Heart right ventricle (tissue), 16 donors: ENCODE measurements at regions of chr10 and their contacts with region 1.

Region 1: DNA sequence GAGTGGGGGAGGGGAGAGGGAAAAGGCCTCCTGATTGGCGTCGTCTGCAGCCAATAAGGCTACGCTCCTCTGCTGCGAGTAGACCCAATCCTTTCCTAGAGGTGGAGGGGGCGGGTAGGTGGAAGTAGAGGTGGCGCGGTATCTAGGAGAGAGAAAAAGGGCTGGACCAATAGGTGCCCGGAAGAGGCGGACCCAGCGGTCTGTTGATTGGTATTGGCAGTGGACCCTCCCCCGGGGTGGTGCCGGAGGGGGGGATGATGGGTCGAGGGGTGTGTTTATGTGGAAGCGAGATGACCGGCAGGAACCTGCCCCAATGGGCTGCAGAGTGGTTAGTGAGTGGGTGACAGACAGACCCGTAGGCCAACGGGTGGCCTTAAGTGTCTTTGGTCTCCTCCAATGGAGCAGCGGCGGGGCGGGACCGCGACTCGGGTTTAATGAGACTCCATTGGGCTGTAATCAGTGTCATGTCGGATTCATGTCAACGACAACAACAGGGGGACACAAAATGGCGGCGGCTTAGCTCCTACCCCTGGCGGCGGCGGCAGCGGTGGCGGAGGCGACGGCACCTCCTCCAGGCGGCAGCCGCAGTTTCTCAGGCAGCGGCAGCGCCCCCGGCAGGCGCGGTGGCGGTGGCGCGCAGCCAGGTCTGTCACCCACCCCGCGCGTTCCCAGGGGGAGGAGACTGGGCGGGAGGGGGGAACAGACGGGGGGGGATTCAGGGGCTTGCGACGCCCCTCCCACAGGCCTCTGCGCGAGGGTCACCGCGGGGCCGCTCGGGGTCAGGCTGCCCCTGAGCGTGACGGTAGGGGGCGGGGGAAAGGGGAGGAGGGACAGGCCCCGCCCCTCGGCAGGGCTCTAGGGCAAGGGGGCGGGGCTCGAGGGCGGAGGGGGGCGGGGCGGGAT is at the start of gene KAT6B:
- DNase-seq: peak; percentile 100
- ATAC-seq: peak; percentile 89 to 96 (median 94)
- H3K4me3 ChIP-seq: peak within 1 kb of the TSS; percentile 77 to 98 (median 90)
- H3K27ac ChIP-seq: peak within 1 kb of the TSS; percentile 97 to 100 (median 99)
- H3K4me1 ChIP-seq: peaks cover 5 to 58% (median 46%) of the 10 kb centered on the region in 9 donors
- H3K27me3 ChIP-seq: no peaks in the 10 kb centered on the region
- CTCF ChIP-seq: peak in 5 of 9 donors; percentile 10 to 40 (median 34)
- total RNA-seq, gene KAT6B: 28.3 to 58.4 (median 51.5) TPM

Region 2: DNA sequence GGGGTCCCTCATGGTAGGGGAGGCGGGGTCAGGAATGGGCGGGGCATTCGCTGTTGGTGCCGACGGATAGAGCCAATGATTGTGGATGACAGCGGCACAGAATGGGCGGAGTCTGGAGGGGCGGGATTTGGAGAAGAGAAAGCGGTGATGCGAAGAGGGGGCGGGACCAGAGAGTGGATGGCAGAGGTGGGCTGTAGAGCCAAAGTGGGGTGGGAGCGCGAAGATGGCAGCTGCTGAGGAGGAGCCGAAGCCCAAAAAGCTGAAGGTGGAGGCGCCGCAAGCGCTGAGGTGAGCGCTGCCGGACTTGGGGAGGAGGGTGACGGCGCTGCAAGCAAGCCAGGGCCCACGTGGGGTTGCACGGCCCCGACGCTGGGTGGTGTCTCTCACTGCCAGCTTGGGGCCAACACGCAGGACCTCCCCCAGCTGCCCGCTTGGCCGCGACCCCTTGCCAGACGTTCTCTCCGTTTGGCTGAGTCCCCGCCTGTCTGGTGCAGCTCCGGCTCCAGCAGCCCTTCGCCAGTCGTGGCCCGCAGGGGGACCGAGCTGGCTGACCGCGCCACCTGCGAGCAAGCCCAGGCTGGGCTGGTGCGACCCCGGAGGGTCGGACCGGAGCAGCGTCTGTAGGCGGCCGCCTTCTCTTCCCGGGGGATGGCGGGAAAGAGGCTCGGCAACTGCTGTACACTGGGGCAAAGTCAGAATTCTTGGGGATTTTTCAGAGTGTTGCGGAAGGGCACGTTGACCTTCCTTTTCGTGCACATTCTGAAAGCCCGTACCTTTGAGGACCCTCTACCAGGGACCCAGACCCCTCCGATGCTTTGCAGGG is 675.1 kb before region 1 on chr10 and contains the start of gene ADK:
- intact Hi-C with region 1: loop called in 1 of 10 experiments (anchors 10 kb)
- DNase-seq: peak; percentile 99 to 100
- ATAC-seq: peak; percentile 96 to 99 (median 98)
- H3K4me3 ChIP-seq: peak within 1 kb of the TSS; percentile 56 to 99 (median 76)
- H3K27ac ChIP-seq: peak within 1 kb of the TSS; percentile 62 to 93 (median 90)
- H3K4me1 ChIP-seq: peaks cover 0 to 61% (median 40%) of the 10 kb centered on the region in 9 donors
- H3K27me3 ChIP-seq: no peaks in the 10 kb centered on the region
- CTCF ChIP-seq: peak in 4 of 9 donors; percentile 37 to 62 (median 42)
- total RNA-seq, gene ADK: 25.5 to 50.0 (median 40.1) TPM

Region 3: DNA sequence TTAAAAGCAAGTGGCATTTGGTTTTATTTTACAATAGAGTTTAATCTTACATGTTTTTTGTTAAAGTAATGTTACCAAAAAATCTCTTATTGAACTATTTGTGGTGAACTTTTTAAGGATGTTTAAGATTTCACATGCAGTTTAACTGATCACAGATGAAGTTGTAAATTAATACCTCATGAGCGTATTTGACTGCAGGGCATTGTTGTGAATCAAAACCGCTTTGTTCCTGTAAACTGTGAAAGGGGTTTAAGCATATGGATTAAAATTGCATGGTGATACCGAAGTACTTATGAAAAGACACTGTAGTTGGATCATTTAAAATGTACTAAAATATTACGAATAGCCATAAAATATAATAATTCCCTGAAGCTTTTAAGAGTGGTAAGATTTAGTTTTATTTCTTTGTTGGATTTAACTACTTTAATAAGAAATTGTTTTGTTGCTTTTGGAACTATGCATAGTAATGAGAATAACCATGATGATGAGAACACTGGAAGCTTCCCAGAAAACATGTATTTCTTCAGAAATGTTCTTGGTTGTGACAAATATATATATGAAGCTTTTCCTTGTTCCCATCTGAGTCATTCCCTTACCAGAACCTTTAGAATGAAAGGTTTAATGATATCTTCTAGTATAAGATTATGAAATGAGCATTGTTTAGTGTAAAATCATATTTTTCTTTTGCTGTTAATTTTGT is 544.1 kb before region 1 on chr10:
- intact Hi-C with region 1: loop called in 1 of 10 experiments (anchors 10 kb)
- DNase-seq: no peak
- ATAC-seq: no peak
- H3K4me3 ChIP-seq: no peak overlapping the region
- H3K27ac ChIP-seq: no peak overlapping the region
- H3K4me1 ChIP-seq: peaks cover 0 to 6% (median 0%) of the 10 kb centered on the region in 9 donors
- H3K27me3 ChIP-seq: no peaks in the 10 kb centered on the region
- CTCF ChIP-seq: no peak

Region 4: GRCh38 chr10:74589226-74589673 is 237.1 kb before region 1 on chr10:
- intact Hi-C with region 1: loop called in 6 of 10 experiments (anchors 5 to 10 kb)
- DNase-seq: peak; percentile 79 to 94
- ATAC-seq: peak; percentile 89 to 97 (median 94)
- H3K4me3 ChIP-seq: no peak overlapping the region
- H3K27ac ChIP-seq: peak overlapping the region in 9 of 10 donors; percentile 13 to 72 (median 53)
- H3K4me1 ChIP-seq: peaks cover 9 to 91% (median 62%) of the 10 kb centered on the region in 9 donors
- H3K27me3 ChIP-seq: no peaks in the 10 kb centered on the region
- CTCF ChIP-seq: no peak

Region 5: DNA sequence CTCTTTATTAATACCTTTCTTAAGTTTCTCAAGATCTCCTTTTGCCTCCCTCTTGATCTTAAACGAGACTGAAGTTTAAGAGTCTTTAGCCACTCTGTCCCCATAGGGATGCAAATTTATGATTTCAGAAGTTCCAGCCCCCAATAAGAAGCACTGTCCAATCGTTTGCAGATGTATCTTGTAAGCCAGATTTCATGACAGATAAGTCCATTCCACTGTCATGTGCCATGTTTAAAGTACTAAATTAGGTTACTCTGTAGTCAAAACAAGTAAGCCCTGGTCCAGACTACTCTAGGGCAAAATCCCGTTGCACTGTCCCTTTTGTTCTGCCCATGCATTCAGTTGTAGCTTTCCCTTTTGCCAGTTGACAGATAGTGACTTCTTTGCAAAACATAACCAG is 157.2 kb before region 1 on chr10:
- intact Hi-C with region 1: no loop called
- DNase-seq: no peak
- ATAC-seq: no peak
- H3K4me3 ChIP-seq: no peak overlapping the region
- H3K27ac ChIP-seq: no peak overlapping the region
- H3K4me1 ChIP-seq: peaks cover 0 to 20% (median 0%) of the 10 kb centered on the region in 9 donors
- H3K27me3 ChIP-seq: no peaks in the 10 kb centered on the region
- CTCF ChIP-seq: no peak

Region 6: GRCh38 chr10:74851831-74852230 is 25.4 kb after region 1 on chr10:
- intact Hi-C with region 1: loop called in 1 of 10 experiments (anchors 2 kb)
- DNase-seq: peak in 1 of 2 donors; percentile 52
- ATAC-seq: peak in 7 of 8 donors; percentile 13 to 54 (median 36)
- H3K4me3 ChIP-seq: no peak overlapping the region
- H3K27ac ChIP-seq: peak overlapping the region in 9 of 10 donors; percentile 0 to 69 (median 23)
- H3K4me1 ChIP-seq: peaks cover 0 to 76% (median 60%) of the 10 kb centered on the region in 9 donors
- H3K27me3 ChIP-seq: no peaks in the 10 kb centered on the region
- CTCF ChIP-seq: no peak

Region 7: DNA sequence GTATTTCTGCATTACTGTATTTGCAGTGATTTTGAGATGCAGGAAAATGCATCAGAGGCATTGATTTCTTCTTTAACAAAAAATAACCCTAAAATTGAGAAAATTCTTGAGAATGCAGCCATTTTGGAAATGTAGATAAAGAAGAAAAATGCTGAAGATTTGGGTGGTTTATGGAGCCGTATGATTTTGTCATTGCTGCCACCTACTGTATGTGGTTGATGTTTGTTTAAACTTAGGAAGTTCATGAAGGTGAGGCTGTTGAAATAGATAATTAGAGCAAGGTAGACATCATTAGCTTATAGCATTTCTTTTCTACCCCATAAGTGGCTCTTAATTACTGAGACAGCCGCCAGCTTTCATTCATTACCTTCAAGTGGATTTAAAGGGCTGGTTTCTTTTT is 193.0 kb after region 1 on chr10:
- intact Hi-C with region 1: loop called in 2 of 10 experiments (anchors 10 kb)
- DNase-seq: no peak
- ATAC-seq: peak in 1 of 8 donors; percentile 41
- H3K4me3 ChIP-seq: no peak overlapping the region
- H3K27ac ChIP-seq: no peak overlapping the region
- H3K4me1 ChIP-seq: peaks cover 0 to 26% (median 15%) of the 10 kb centered on the region in 9 donors
- H3K27me3 ChIP-seq: no peaks in the 10 kb centered on the region
- CTCF ChIP-seq: peak in 6 of 9 donors; percentile 29 to 53 (median 46)

Region 8: GRCh38 chr10:75111367-75111906 is 285.0 kb after region 1 on chr10 and contains the start of gene SAMD8:
- intact Hi-C with region 1: loop called in 4 of 10 experiments (anchors 5 to 10 kb)
- DNase-seq: peak; percentile 96 to 97
- ATAC-seq: peak; percentile 86 to 93 (median 89)
- H3K4me3 ChIP-seq: peak within 1 kb of the TSS; percentile 74 to 98 (median 81)
- H3K27ac ChIP-seq: peak within 1 kb of the TSS; percentile 85 to 99 (median 96)
- H3K4me1 ChIP-seq: peaks cover 0 to 66% (median 51%) of the 10 kb centered on the region in 9 donors
- H3K27me3 ChIP-seq: no peaks in the 10 kb centered on the region
- CTCF ChIP-seq: peak in 8 of 9 donors; percentile 47 to 61 (median 52)
- total RNA-seq, gene SAMD8: 23.8 to 31.2 (median 26.5) TPM